B cell (primary cell): ENCODE measurements at regions of chr7 and their contacts with region 1.

Region 1: GRCh38 chr7:2978403-2978802 is 65.3 kb downstream of the CARD11 start:
- DNase-seq: peak; percentile 96
- ATAC-seq: peak; percentile 84
- H3K4me3 ChIP-seq: peak overlapping the region; percentile 46 to 75 (median 63)
- H3K4me3 Mint-ChIP-seq: peak overlapping the region; percentile 98
- H3K27ac ChIP-seq: peak overlapping the region; percentile 77 to 92
- H3K27ac Mint-ChIP-seq: peak overlapping the region; percentile 93
- H3K4me1 ChIP-seq: peaks cover 60 to 83% of the 10 kb centered on the region in 2 donors
- H3K4me1 Mint-ChIP-seq: peaks cover 81% of the 10 kb centered on the region
- H3K27me3 ChIP-seq: no peaks in the 10 kb centered on the region
- H3K27me3 Mint-ChIP-seq: no peaks in the 10 kb centered on the region
- CTCF ChIP-seq: no peak

Region 2: DNA sequence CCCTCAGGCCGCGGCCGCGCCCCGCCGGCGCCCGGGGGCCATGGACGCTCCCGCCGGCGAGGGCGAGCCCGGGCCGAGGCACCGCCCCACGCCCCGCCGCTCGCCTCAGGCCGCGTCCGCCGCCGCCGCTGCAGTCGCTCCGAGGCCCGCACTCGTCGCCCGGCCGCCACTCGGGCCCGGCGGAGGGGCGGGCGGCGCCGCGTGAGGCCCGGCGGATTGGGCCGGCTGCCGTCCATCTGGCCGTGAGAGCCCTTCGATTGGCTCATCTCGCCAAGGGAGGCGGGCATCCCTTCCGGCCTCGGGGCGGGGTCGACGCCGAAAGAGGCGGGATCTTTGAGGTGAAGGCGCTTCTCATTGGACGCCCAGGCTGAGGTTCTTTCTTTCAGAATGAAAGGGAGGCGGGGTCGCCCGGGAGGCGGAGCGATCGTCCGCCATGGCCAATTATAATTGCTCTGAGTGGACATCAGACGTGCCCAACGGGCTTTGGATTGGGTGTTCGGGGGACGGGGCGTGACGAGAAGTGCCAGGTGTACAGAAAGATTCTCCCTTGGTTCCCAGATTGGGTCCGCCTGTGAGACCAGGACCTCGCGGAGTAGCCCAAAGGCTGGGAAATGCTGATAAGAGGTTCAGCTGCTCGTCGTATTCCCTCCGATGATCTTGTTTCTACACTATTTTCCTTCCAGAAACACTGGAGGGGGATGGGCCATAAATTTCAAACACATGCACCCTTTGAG is 134.1 kb before region 1 on chr7 and contains the start of gene GNA12:
- CTCF ChIA-PET with region 1: no interaction called
- POLR2A ChIA-PET with region 1: no interaction called
- intact Hi-C with region 1: loop called (anchors 1 kb)
- DNase-seq: peak; percentile 98
- ATAC-seq: peak; percentile 93
- H3K4me3 ChIP-seq: peak within 1 kb of the TSS; percentile 50 to 70 (median 65)
- H3K4me3 Mint-ChIP-seq: peak within 1 kb of the TSS; percentile 95
- H3K27ac ChIP-seq: peak within 1 kb of the TSS in 1 of 2 donors; percentile 53
- H3K27ac Mint-ChIP-seq: peak within 1 kb of the TSS; percentile 80
- H3K4me1 ChIP-seq: peaks cover 34 to 45% of the 10 kb centered on the region in 2 donors
- H3K4me1 Mint-ChIP-seq: peaks cover 51% of the 10 kb centered on the region
- H3K27me3 ChIP-seq: no peaks in the 10 kb centered on the region
- H3K27me3 Mint-ChIP-seq: no peaks in the 10 kb centered on the region
- CTCF ChIP-seq: no peak
- total RNA-seq, gene GNA12: 110 and 114 TPM in 2 replicates

Region 3: GRCh38 chr7:2954433-2954853 is 24.0 kb before region 1 on chr7:
- CTCF ChIA-PET with region 1: no interaction called
- POLR2A ChIA-PET with region 1: interaction called, 3 read pairs
- intact Hi-C with region 1: loop called (anchors 2 kb)
- DNase-seq: no peak
- ATAC-seq: peak; percentile 49
- H3K4me3 ChIP-seq: no peak overlapping the region
- H3K4me3 Mint-ChIP-seq: peak overlapping the region; percentile 26
- H3K27ac ChIP-seq: peak overlapping the region in 1 of 2 donors; percentile 63
- H3K27ac Mint-ChIP-seq: peak overlapping the region; percentile 74
- H3K4me1 ChIP-seq: peaks cover 37% of the 10 kb centered on the region in 2 donors
- H3K4me1 Mint-ChIP-seq: peaks cover 59% of the 10 kb centered on the region
- H3K27me3 ChIP-seq: no peaks in the 10 kb centered on the region
- H3K27me3 Mint-ChIP-seq: no peaks in the 10 kb centered on the region
- CTCF ChIP-seq: no peak

Region 4: DNA sequence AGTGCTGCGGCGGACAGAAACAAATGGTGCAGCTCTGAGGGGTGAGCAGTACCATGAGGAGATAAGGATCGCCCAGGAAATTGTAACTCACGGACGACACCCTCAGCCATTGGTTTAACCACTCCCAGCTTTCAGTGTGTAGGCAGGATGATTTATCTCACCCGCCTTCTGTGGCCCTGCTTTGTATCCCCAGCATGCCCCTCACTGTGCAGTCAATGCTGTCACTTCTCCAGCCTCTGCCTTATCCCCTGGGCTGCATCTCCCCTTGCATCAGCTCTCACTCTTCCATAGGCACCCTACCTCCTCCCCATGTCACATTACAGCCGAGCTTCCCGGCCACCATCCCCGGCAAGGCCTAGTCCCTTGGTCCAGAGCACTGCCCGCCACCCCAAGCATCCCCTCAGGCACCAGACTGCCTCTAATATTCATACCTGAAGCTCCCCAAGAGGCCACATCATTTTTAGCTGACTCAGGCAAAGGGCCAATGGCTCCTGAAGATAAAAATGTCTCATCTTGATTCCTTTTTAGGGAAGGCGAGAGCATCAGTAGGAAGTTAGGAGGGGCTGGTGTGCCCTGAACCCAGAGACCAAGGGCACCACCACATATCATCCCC is 11.8 kb before region 1 on chr7:
- CTCF ChIA-PET with region 1: interaction called, 20 read pairs
- POLR2A ChIA-PET with region 1: interaction called, 4 read pairs
- intact Hi-C with region 1: no loop called
- DNase-seq: no peak
- ATAC-seq: no peak
- H3K4me3 ChIP-seq: no peak overlapping the region
- H3K4me3 Mint-ChIP-seq: no peak overlapping the region
- H3K27ac ChIP-seq: peak overlapping the region in 1 of 2 donors; percentile 7
- H3K27ac Mint-ChIP-seq: peak overlapping the region; percentile 54
- H3K4me1 ChIP-seq: peaks cover 11 to 13% of the 10 kb centered on the region in 2 donors
- H3K4me1 Mint-ChIP-seq: peaks cover 31% of the 10 kb centered on the region
- H3K27me3 ChIP-seq: no peaks in the 10 kb centered on the region
- H3K27me3 Mint-ChIP-seq: no peaks in the 10 kb centered on the region
- CTCF ChIP-seq: no peak

Region 5: DNA sequence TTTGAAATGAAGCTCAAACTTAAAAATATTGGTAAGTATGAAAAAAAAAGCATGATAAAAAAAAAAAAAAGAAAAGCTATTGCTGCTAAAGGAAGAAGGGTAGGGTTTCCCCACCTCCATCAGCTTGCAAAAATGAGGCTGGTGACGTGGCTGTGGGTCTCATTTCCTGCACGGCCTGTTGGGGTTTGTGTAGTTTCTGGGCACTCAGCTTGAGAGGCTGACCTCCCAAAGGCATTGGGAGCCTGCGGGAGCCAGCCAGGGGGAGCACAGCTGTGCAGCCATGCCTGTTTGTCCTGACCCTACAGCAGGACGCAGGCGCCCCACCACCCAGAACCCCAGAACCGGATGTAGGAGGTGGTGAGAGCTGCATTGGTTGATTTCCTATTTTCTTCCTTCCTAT is 114.1 kb after region 1 on chr7:
- CTCF ChIA-PET with region 1: interaction called, 3 read pairs
- POLR2A ChIA-PET with region 1: interaction called, 4 read pairs
- intact Hi-C with region 1: loop called (anchors 1 kb)
- DNase-seq: peak; percentile 83
- ATAC-seq: peak; percentile 86
- H3K4me3 ChIP-seq: peak overlapping the region in 1 of 5 experiments; percentile 20
- H3K4me3 Mint-ChIP-seq: peak overlapping the region; percentile 38
- H3K27ac ChIP-seq: peak overlapping the region; percentile 54 to 76
- H3K27ac Mint-ChIP-seq: peak overlapping the region; percentile 85
- H3K4me1 ChIP-seq: peaks cover 37 to 50% of the 10 kb centered on the region in 2 donors
- H3K4me1 Mint-ChIP-seq: peaks cover 45% of the 10 kb centered on the region
- H3K27me3 ChIP-seq: no peaks in the 10 kb centered on the region
- H3K27me3 Mint-ChIP-seq: no peaks in the 10 kb centered on the region
- CTCF ChIP-seq: no peak

Region 6: GRCh38 chr7:3592401-3593135 is 614.2 kb after region 1 on chr7:
- CTCF ChIA-PET with region 1: no interaction called
- POLR2A ChIA-PET with region 1: no interaction called
- intact Hi-C with region 1: loop called (anchors 10 kb)
- DNase-seq: no peak
- ATAC-seq: no peak
- H3K4me3 ChIP-seq: no peak overlapping the region
- H3K4me3 Mint-ChIP-seq: no peak overlapping the region
- H3K27ac ChIP-seq: no peak overlapping the region
- H3K27ac Mint-ChIP-seq: peak overlapping the region; percentile 62
- H3K4me1 ChIP-seq: peaks cover 17 to 19% of the 10 kb centered on the region in 2 donors
- H3K4me1 Mint-ChIP-seq: peaks cover 29% of the 10 kb centered on the region
- H3K27me3 ChIP-seq: no peaks in the 10 kb centered on the region
- H3K27me3 Mint-ChIP-seq: no peaks in the 10 kb centered on the region
- CTCF ChIP-seq: no peak